ENCODE measurements at regions of chr16 and their contacts with region 1.

Region 1: GRCh38 chr16:15765880-15766279 is 90.9 kb downstream of the MYH11 start:
- DNase-seq: peak; percentile 29 to 71 (median 41)
- H3K4me3 ChIP-seq: no peak overlapping the region
- H3K27ac ChIP-seq: no peak overlapping the region
- H3K4me1 ChIP-seq: no peaks in the 10 kb centered on the region
- H3K27me3 ChIP-seq: no peaks in the 10 kb centered on the region
- CTCF ChIP-seq: peak; percentile 48 to 70 (median 68)
- POLR2A ChIP-seq: no peak

Region 2: DNA sequence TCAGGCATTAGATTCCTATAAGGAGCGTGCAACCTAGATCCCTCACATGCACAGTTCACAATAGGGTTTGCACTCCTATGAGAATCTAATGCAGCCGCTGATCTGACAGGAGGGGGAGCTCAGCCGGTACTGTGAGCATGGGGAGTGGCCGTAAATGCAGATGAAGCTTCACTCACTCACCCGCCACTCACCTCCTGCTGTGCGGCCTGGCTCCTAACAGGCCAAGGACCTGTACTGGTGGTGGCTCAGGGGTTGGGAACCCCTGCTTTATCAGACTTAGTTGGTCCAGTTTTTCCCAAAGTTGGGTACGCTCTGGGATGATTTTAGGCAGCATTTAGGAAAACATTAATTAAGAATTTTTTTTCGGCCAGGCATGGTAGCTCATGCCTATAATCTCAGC is 226.7 kb before region 1 on chr16:
- intact Hi-C with region 1: no loop called
- DNase-seq: no peak
- H3K4me3 ChIP-seq: no peak overlapping the region
- H3K27ac ChIP-seq: no peak overlapping the region
- H3K4me1 ChIP-seq: no peaks in the 10 kb centered on the region
- H3K27me3 ChIP-seq: no peaks in the 10 kb centered on the region
- CTCF ChIP-seq: no peak
- POLR2A ChIP-seq: no peak

Region 3: GRCh38 chr16:15822957-15823356 is 57.1 kb after region 1 on chr16:
- intact Hi-C with region 1: loop called (anchors 5 to 10 kb)
- DNase-seq: peak in 3 of 7 donors; percentile 4 to 31 (median 17)
- H3K4me3 ChIP-seq: no peak overlapping the region
- H3K27ac ChIP-seq: no peak overlapping the region
- H3K4me1 ChIP-seq: no peaks in the 10 kb centered on the region
- H3K27me3 ChIP-seq: no peaks in the 10 kb centered on the region
- CTCF ChIP-seq: no peak
- POLR2A ChIP-seq: no peak

Region 4: GRCh38 chr16:15829460-15829859 is 63.6 kb after region 1 on chr16:
- intact Hi-C with region 1: loop called (anchors 5 to 10 kb)
- DNase-seq: peak; percentile 22 to 83 (median 44)
- H3K4me3 ChIP-seq: no peak overlapping the region
- H3K27ac ChIP-seq: peak overlapping the region in 1 of 5 donors; percentile 30
- H3K4me1 ChIP-seq: no peaks in the 10 kb centered on the region
- H3K27me3 ChIP-seq: no peaks in the 10 kb centered on the region
- CTCF ChIP-seq: no peak
- POLR2A ChIP-seq: no peak

Region 5: DNA sequence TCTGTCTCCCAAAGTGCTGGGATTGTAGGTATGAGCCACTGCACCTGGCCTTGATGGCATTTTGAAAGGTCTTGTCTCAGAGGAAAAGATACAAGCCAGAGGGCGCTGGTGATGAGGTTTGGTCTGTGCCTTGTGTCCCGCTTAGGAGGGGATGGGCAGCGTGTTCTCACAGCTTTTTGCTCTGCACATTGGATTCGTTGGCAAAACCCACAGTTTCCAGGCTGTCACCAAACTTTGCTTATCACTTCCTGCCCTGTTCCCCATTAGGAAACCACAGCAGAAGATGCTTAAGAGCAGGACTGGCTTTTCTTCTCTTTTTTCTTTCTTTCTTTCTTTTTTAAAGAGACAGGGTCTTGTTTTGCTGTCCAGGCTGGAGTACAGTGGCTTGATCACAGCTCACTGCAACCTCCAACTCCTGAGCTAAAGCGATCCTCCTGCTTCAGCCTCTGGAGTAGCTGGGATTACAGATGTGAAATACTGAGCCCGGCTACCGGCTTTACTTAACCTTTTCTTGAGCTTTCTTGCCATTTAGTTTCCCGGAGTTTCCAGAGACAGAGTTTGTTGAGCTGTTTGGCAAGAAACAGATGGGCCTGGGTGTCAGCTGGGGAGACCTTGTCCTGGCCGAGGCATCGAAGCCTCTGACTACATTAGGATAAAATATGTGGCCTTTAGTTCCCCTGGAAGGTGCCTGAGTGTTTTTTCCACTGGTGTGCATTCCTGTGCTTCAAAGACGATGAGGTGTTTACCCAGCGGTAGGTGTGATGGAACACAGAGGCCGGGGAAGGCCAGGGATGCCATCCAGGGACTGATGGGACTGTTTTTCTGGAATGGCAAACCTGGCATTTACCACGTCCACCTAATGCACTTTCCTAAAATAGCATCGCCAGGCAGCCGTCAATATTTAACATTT is 296.4 kb after region 1 on chr16:
- intact Hi-C with region 1: no loop called
- DNase-seq: no peak
- H3K4me3 ChIP-seq: no peak overlapping the region
- H3K27ac ChIP-seq: no peak overlapping the region
- H3K4me1 ChIP-seq: peaks cover 0 to 4% of the 10 kb centered on the region in 2 donors
- H3K27me3 ChIP-seq: no peaks in the 10 kb centered on the region
- CTCF ChIP-seq: no peak
- POLR2A ChIP-seq: no peak

Region 6: GRCh38 chr16:16073891-16074881 is 308.3 kb after region 1 on chr16:
- intact Hi-C with region 1: loop called in 1 of 2 experiments (anchors 10 kb)
- DNase-seq: peak in 1 of 7 donors; percentile 33
- H3K4me3 ChIP-seq: no peak overlapping the region
- H3K27ac ChIP-seq: peak overlapping the region in 2 of 5 donors; percentile 7 to 31
- H3K4me1 ChIP-seq: peaks cover 6 to 17% of the 10 kb centered on the region in 2 donors
- H3K27me3 ChIP-seq: no peaks in the 10 kb centered on the region
- CTCF ChIP-seq: no peak
- POLR2A ChIP-seq: no peak

Region 7: GRCh38 chr16:16133943-16134604 is 368.2 kb after region 1 on chr16:
- intact Hi-C with region 1: loop called in 1 of 2 experiments (anchors 5 kb)
- DNase-seq: no peak
- H3K4me3 ChIP-seq: no peak overlapping the region
- H3K27ac ChIP-seq: no peak overlapping the region
- H3K4me1 ChIP-seq: no peaks in the 10 kb centered on the region
- H3K27me3 ChIP-seq: no peaks in the 10 kb centered on the region
- CTCF ChIP-seq: no peak
- POLR2A ChIP-seq: no peak

Region 8: GRCh38 chr16:16191493-16192167 is 425.8 kb after region 1 on chr16:
- intact Hi-C with region 1: loop called in 1 of 2 experiments (anchors 5 kb)
- DNase-seq: no peak
- H3K4me3 ChIP-seq: no peak overlapping the region
- H3K27ac ChIP-seq: no peak overlapping the region
- H3K4me1 ChIP-seq: no peaks in the 10 kb centered on the region
- H3K27me3 ChIP-seq: no peaks in the 10 kb centered on the region
- CTCF ChIP-seq: no peak
- POLR2A ChIP-seq: no peak

Measured in adrenal gland (tissue), 19 donors.